Left ventricle myocardium inferior (tissue), 1 donor: ENCODE measurements at regions of chr1 and their contacts with region 1.

Region 1: GRCh38 chr1:185581961-185582725 is 152.0 kb upstream of the HMCN1 start:
- DNase-seq: no peak
- H3K4me3 ChIP-seq: no peak overlapping the region
- H3K27ac ChIP-seq: no peak overlapping the region
- H3K4me1 ChIP-seq: no peaks in the 10 kb centered on the region
- H3K27me3 ChIP-seq: no peaks in the 10 kb centered on the region
- CTCF ChIP-seq: no peak

Region 2: DNA sequence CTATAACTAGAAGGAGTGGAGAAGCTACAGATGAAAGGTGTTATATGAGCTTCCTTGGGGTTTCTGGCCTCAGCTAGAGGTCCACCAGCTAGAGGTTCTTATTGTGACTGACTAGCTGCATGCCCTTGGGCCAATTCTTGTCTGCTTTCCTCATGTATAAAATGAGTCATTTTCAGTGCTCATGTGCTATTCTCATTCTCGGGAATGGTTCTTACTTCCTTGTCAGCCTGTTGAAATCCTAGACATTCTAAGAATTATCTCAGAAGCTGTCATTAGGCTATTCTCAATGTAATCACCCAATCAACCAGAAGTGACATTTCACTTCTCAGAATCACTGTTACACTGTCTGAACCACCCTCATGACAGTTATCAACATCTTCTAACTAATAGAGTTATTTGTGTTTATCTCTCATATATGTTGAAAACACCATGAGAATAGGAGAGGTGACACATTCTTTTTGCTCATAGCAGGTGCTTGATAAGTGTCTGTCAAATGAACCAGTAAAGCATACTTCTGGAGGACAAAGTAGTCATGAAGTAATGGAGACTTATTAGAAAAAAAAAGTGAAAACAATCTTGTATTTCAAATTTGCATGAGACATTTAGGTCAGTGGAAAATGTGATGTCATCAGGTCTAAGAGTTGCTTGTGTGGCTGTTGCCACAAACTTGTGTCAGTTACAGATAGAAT is 142.3 kb before region 1 on chr1:
- intact Hi-C with region 1: loop called (anchors 10 kb)
- DNase-seq: no peak
- H3K4me3 ChIP-seq: no peak overlapping the region
- H3K27ac ChIP-seq: no peak overlapping the region
- H3K4me1 ChIP-seq: peaks cover 20% of the 10 kb centered on the region
- H3K27me3 ChIP-seq: no peaks in the 10 kb centered on the region
- CTCF ChIP-seq: no peak